Natural killer cell (primary cell): ENCODE measurements at regions of chr1 and their contacts with region 1.

Region 1: GRCh38 chr1:225460737-225461562 is 33.1 kb upstream of the LBR start:
- DNase-seq: peak; percentile 71 to 81
- ATAC-seq: peak; percentile 89 to 95 (median 89)
- H3K4me3 ChIP-seq: no peak overlapping the region
- H3K4me3 Mint-ChIP-seq: peak overlapping the region; percentile 81
- H3K27ac ChIP-seq: peak overlapping the region; percentile 82
- H3K27ac Mint-ChIP-seq: peak overlapping the region; percentile 92 to 96
- H3K4me1 ChIP-seq: peaks cover 62% of the 10 kb centered on the region
- H3K4me1 Mint-ChIP-seq: peaks cover 70 to 87% of the 10 kb centered on the region in 2 donors
- H3K27me3 ChIP-seq: no peaks in the 10 kb centered on the region
- H3K27me3 Mint-ChIP-seq: no peaks in the 10 kb centered on the region
- CTCF ChIP-seq: no peak

Region 2: DNA sequence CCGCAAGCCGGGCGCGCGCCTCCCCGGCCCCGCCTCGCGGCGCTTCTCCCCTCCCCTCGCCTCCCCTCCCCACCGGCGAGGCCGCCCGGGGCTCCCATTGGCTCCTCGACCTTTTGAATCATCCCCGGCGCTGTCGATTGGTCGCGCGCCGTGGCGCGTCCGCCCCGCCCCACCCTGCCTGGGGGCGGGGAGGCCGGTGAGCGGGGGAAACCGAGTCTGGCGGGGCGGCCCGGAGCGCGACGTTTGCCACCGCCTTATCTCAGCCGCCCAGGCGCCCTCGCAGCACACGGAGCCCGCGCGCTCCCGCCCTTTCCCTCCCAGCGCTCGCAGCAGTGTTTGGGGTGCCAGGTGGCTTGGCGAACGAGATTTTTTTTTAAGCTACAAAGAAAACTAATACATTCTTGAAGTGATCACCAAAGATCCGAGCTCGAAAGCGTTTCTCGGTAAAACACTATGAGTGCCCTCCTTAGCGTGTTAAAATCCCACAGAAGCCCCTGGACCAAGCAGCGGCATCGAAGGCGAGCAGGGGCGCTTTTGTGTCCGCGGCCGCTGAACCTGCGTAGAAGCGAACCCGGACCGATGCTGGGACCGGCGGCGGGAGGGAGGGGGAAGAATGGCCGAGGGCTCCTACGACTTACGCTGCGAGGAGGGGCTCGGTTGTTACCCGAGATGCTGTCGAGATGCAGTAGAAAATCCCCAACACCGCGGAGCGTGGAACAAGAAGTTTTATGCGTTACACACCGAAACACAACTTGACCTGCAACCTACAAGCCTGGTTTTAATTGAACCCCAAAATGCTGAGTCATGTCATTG is 32.7 kb before region 1 on chr1:
- intact Hi-C with region 1: loop called (anchors 1 kb)
- DNase-seq: peak; percentile 87 to 95
- ATAC-seq: peak; percentile 88 to 96 (median 92)
- H3K4me3 ChIP-seq: peak overlapping the region; percentile 76
- H3K4me3 Mint-ChIP-seq: peak overlapping the region; percentile 89
- H3K27ac ChIP-seq: peak overlapping the region; percentile 91
- H3K27ac Mint-ChIP-seq: peak overlapping the region; percentile 88 to 90
- H3K4me1 ChIP-seq: peaks cover 36% of the 10 kb centered on the region
- H3K4me1 Mint-ChIP-seq: peaks cover 45 to 48% of the 10 kb centered on the region in 2 donors
- H3K27me3 ChIP-seq: no peaks in the 10 kb centered on the region
- H3K27me3 Mint-ChIP-seq: no peaks in the 10 kb centered on the region
- CTCF ChIP-seq: no peak

Region 3: GRCh38 chr1:225445644-225446594 is 15.0 kb before region 1 on chr1:
- intact Hi-C with region 1: loop called (anchors 1 kb)
- DNase-seq: peak in 1 of 2 donors; percentile 32
- ATAC-seq: peak in 1 of 3 donors; percentile 21
- H3K4me3 ChIP-seq: peak overlapping the region; percentile 14
- H3K4me3 Mint-ChIP-seq: peak overlapping the region; percentile 81
- H3K27ac ChIP-seq: peak overlapping the region; percentile 67
- H3K27ac Mint-ChIP-seq: peak overlapping the region; percentile 91 to 97
- H3K4me1 ChIP-seq: peaks cover 53% of the 10 kb centered on the region
- H3K4me1 Mint-ChIP-seq: peaks cover 63 to 85% of the 10 kb centered on the region in 2 donors
- H3K27me3 ChIP-seq: no peaks in the 10 kb centered on the region
- H3K27me3 Mint-ChIP-seq: no peaks in the 10 kb centered on the region
- CTCF ChIP-seq: no peak

Region 4: GRCh38 chr1:225482421-225482950 is 21.5 kb after region 1 on chr1:
- intact Hi-C with region 1: no loop called
- DNase-seq: no peak
- ATAC-seq: no peak
- H3K4me3 ChIP-seq: no peak overlapping the region
- H3K4me3 Mint-ChIP-seq: no peak overlapping the region
- H3K27ac ChIP-seq: no peak overlapping the region
- H3K27ac Mint-ChIP-seq: no peak overlapping the region
- H3K4me1 ChIP-seq: peaks cover 23% of the 10 kb centered on the region
- H3K4me1 Mint-ChIP-seq: peaks cover 10 to 11% of the 10 kb centered on the region in 2 donors
- H3K27me3 ChIP-seq: no peaks in the 10 kb centered on the region
- H3K27me3 Mint-ChIP-seq: no peaks in the 10 kb centered on the region
- CTCF ChIP-seq: no peak

Region 5: DNA sequence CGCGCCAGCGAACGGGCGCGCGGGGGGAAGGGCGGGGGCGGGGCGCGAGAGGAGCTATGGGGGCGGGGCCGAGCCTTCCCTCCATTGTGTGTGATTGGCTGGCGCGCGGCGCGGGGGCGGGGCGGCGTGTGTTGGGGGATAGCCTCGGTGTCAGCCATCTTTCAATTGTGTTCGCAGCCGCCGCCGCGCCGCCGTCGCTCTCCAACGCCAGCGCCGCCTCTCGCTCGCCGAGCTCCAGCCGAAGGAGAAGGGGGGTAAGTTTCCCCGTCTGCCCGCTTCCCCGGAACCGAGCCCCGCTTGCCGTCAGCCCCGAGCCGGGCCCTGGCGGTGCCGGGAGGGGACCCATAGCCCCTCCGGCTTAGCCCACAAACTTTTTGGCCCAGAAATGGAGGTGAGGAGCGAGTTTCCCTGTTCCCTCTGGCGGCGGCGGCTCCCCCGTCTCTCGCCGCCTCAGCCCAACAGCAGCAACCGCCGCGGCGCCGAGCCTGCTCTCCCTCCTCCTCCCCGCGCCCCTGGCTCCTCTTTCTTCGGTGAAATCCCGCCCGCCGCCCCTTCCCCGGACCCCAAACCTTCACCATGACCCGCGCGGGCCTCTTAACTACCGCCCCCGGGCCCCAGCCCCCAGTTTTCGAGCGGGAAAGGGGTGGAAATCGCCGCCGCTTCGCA is 601.7 kb after region 1 on chr1 and contains the start of gene H3-3A:
- intact Hi-C with region 1: loop called (anchors 5 kb)
- DNase-seq: peak; percentile 97 to 98
- ATAC-seq: peak; percentile 81 to 96 (median 84)
- H3K4me3 ChIP-seq: peak within 1 kb of the TSS; percentile 63
- H3K4me3 Mint-ChIP-seq: peak within 1 kb of the TSS; percentile 100
- H3K27ac ChIP-seq: peak within 1 kb of the TSS; percentile 96
- H3K27ac Mint-ChIP-seq: peak within 1 kb of the TSS; percentile 99
- H3K4me1 ChIP-seq: peaks cover 18% of the 10 kb centered on the region
- H3K4me1 Mint-ChIP-seq: peaks cover 50% of the 10 kb centered on the region in 2 donors
- H3K27me3 ChIP-seq: no peaks in the 10 kb centered on the region
- H3K27me3 Mint-ChIP-seq: no peaks in the 10 kb centered on the region
- CTCF ChIP-seq: no peak
- total RNA-seq, gene H3-3A: 490 to 616 (median 522) TPM